Pancreas (tissue), 10 donors: ENCODE measurements at regions of chr14 and their contacts with region 1.

Region 1: GRCh38 chr14:92951912-92952471 is 29.0 kb downstream of the CHGA start:
- DNase-seq: peak; percentile 61 to 94 (median 82)
- ATAC-seq: peak; percentile 85 to 98 (median 96)
- H3K4me3 ChIP-seq: no peak overlapping the region
- H3K27ac ChIP-seq: no peak overlapping the region
- H3K4me1 ChIP-seq: no peaks in the 10 kb centered on the region
- H3K27me3 ChIP-seq: no peaks in the 10 kb centered on the region
- CTCF ChIP-seq: peak; percentile 92 to 97 (median 94)

Region 2: GRCh38 chr14:92563359-92563758 is 388.6 kb before region 1 on chr14:
- intact Hi-C with region 1: no loop called
- DNase-seq: no peak
- ATAC-seq: peak in 2 of 4 donors; percentile 63 to 77
- H3K4me3 ChIP-seq: no peak overlapping the region
- H3K27ac ChIP-seq: no peak overlapping the region
- H3K4me1 ChIP-seq: no peaks in the 10 kb centered on the region
- H3K27me3 ChIP-seq: no peaks in the 10 kb centered on the region
- CTCF ChIP-seq: no peak

Region 3: GRCh38 chr14:93103392-93104080 is 151.5 kb after region 1 on chr14:
- intact Hi-C with region 1: loop called in 1 of 3 experiments (anchors 10 kb)
- DNase-seq: peak in 1 of 6 donors; percentile 35
- ATAC-seq: peak in 3 of 4 donors; percentile 33 to 66 (median 49)
- H3K4me3 ChIP-seq: no peak overlapping the region
- H3K27ac ChIP-seq: no peak overlapping the region
- H3K4me1 ChIP-seq: peaks cover 17 to 26% (median 20%) of the 10 kb centered on the region in 3 donors
- H3K27me3 ChIP-seq: no peaks in the 10 kb centered on the region
- CTCF ChIP-seq: no peak

Region 4: DNA sequence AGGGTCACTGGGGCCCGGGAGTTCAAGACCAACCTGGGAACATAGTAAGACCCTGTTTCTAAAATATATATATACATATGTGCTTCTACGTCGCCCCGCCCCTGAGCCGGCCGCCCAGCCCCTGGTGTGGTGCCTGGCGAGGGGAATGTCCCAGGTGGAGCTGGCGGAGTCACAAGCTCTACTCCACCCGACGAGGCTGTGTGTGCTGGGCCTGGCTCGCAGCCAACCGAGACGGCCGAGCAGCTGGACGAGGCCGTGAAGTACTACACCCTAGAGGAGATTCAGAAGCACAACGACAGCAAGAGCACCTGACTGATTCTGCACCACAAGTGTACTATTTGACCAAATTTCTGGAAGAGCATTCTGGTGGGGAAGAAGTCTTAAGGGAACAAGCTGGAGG is 185.9 kb after region 1 on chr14:
- intact Hi-C with region 1: loop called in 2 of 3 experiments (anchors 5 to 10 kb)
- DNase-seq: peak; percentile 78 to 96 (median 85)
- ATAC-seq: peak; percentile 72 to 80 (median 78)
- H3K4me3 ChIP-seq: no peak overlapping the region
- H3K27ac ChIP-seq: peak overlapping the region in 2 of 4 donors; percentile 46 to 52
- H3K4me1 ChIP-seq: peaks cover 16 to 21% (median 20%) of the 10 kb centered on the region in 3 donors
- H3K27me3 ChIP-seq: no peaks in the 10 kb centered on the region
- CTCF ChIP-seq: peak in 1 of 4 donors; percentile 16

Region 5: GRCh38 chr14:93146119-93146518 is 194.1 kb after region 1 on chr14:
- intact Hi-C with region 1: loop called in 1 of 3 experiments (anchors 10 kb)
- DNase-seq: no peak
- ATAC-seq: no peak
- H3K4me3 ChIP-seq: no peak overlapping the region
- H3K27ac ChIP-seq: no peak overlapping the region
- H3K4me1 ChIP-seq: peaks cover 0 to 8% (median 8%) of the 10 kb centered on the region in 3 donors
- H3K27me3 ChIP-seq: no peaks in the 10 kb centered on the region
- CTCF ChIP-seq: no peak